Tibial artery (tissue), 4 donors: ENCODE measurements at regions of chr14 and their contacts with region 1.

Region 1: DNA sequence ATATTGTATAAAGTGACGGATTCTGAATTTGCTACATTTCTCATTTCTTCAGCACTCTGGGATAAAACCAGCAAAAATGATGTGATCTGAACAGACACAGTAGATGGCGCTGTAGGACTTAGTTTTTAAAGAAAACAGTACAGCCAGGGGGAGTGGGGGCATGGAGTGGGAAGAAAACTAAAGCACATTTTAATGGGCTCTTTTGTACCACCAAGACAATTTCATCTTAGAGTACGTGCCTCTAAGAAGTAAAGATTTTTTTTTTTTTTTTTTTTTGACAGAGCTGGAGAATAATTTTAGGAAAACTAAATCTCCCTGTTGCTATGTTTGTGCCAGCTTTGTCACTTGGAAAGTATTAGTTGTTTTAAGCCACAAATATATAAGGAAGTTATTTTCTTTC is 124.4 kb downstream of the RAD51B start:
- DNase-seq: peak; percentile 78 to 79
- H3K4me3 ChIP-seq: no peak overlapping the region
- H3K27ac ChIP-seq: peak overlapping the region; percentile 75 to 80
- H3K4me1 ChIP-seq: peaks cover 8 to 51% (median 31%) of the 10 kb centered on the region in 4 donors
- H3K27me3 ChIP-seq: no peaks in the 10 kb centered on the region
- CTCF ChIP-seq: peak; percentile 69 to 94

Region 2: DNA sequence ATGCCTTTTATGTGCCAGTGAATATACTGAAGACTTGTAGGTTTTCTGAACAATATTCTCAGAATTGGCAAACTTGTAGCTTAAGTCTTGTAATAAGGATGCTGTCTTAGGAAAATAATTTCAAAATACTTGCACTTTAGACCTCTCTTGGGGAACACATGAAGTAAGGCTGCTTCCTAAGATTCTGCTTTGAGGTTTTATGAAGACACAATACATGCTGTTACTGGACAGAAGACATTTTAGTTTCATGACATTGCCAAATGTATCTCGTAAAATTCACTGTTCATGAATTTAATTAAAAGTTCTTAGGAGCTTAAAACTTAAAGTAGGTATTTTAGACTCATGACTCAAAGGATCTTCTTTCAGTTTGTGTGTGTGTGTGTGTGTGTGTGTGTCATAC is 43.7 kb before region 1 on chr14:
- intact Hi-C with region 1: no loop called
- DNase-seq: no peak
- H3K4me3 ChIP-seq: no peak overlapping the region
- H3K27ac ChIP-seq: no peak overlapping the region
- H3K4me1 ChIP-seq: no peaks in the 10 kb centered on the region
- H3K27me3 ChIP-seq: no peaks in the 10 kb centered on the region
- CTCF ChIP-seq: no peak

Region 3: DNA sequence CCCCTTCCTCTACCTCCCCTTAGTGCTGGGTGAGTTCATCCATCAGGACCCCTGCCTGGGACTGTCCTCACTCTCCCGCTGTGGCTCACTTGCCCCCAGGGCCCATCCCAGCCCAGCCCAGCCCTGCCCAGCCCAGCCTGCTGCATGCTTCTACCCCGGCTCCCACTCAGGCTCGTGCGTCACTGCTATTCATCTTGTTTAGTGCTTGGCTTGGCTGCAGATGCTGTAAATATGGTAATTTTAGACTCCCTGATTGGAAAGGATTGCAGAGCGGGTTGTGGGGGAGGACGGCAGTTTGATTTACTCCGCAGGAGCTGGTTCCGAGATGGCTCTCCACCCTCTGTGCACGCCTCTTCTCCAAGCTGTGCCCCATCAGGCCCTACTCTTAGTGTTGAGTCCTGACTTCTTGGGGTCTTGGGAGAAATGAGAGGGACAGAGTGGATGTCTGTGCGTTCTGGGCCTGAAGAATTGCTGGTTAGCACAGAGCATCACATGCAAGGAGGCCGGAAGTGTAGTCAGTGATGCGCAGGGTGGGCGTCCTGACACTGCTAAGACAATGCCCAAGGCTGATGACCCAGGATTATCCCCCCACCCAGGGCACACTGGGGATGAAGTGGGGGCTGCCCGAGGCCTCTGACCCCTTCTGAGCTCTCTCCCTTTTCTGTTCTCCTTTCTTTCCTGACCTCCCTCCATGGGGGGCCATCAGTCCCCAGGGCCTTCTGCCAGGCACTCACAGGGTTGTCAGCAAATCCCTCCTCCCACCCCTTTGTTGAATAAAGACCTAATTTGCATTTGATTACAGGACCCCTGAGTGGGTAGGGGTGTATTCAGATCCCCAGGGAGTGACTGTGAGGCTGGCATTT is 604.5 kb after region 1 on chr14:
- intact Hi-C with region 1: loop called (anchors 5 kb)
- DNase-seq: peak; percentile 93 to 97
- H3K4me3 ChIP-seq: peak overlapping the region in 1 of 2 donors; percentile 15
- H3K27ac ChIP-seq: peak overlapping the region; percentile 94 to 96
- H3K4me1 ChIP-seq: peaks cover 0 to 96% (median 75%) of the 10 kb centered on the region in 4 donors
- H3K27me3 ChIP-seq: no peaks in the 10 kb centered on the region
- CTCF ChIP-seq: no peak